Prostate gland (tissue), 2 donors: ENCODE measurements at regions of chr2 and their contacts with region 1.

Region 1: DNA sequence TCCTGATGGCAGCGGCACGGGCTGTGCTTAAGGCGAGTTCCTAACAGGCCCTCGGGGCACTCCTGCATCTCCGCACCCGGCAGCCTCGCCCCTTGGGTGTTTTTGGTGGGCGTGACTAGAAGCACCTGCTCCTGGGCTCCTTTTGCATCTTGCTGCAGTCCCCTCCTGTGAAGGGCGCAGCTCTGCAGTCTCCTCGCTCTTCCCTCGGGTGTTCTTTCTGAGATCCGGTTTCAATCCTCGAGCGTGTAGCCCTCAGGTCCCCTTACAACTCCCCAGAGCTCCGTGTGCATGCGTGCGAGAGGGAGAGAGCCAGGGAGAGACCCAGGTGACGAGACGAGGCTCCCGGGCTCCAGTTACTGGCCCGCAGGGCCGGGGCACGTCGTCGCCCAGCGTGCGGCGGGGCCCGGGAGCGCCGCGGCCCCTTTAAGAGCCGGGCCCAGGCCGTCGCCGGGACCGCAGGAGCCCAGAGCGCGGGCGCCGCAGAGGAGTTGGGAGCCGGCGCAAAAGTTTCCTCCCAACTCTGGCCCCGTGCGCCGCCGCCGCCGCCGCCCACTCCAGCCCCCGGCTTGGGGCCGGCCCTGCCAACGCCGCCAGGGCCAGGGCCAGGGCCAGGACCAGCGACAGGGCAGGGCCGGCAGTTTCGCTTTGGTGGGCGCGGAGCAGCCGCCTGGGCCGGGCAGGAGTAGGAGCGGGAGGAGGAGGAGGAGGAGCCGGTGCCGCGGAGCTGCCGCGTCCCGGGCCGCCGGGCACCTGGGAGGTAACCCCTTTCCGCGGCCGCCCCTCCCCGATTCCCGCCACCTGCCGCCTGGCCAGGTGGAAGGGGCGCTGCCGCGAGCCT is at the start of gene PARD3B:
- DNase-seq: peak; percentile 45
- H3K4me3 ChIP-seq: peak within 1 kb of the TSS; percentile 76
- H3K27ac ChIP-seq: peak within 1 kb of the TSS; percentile 84 to 85
- H3K4me1 ChIP-seq: no peaks in the 10 kb centered on the region
- H3K27me3 ChIP-seq: no peaks in the 10 kb centered on the region
- CTCF ChIP-seq: no peak
- POLR2A ChIP-seq: no peak
- total RNA-seq, gene PARD3B: 14.7 to 25.0 TPM

Region 2: GRCh38 chr2:204081487-204082425 is 463.5 kb before region 1 on chr2:
- intact Hi-C with region 1: no loop called
- DNase-seq: no peak
- H3K4me3 ChIP-seq: no peak overlapping the region
- H3K27ac ChIP-seq: no peak overlapping the region
- H3K4me1 ChIP-seq: no peaks in the 10 kb centered on the region
- H3K27me3 ChIP-seq: no peaks in the 10 kb centered on the region
- CTCF ChIP-seq: no peak
- POLR2A ChIP-seq: no peak

Region 3: GRCh38 chr2:204681412-204681811 is 136.2 kb after region 1 on chr2:
- intact Hi-C with region 1: loop called (anchors 10 kb)
- DNase-seq: no peak
- H3K4me3 ChIP-seq: no peak overlapping the region
- H3K27ac ChIP-seq: no peak overlapping the region
- H3K4me1 ChIP-seq: no peaks in the 10 kb centered on the region
- H3K27me3 ChIP-seq: no peaks in the 10 kb centered on the region
- CTCF ChIP-seq: no peak
- POLR2A ChIP-seq: no peak

Region 4: DNA sequence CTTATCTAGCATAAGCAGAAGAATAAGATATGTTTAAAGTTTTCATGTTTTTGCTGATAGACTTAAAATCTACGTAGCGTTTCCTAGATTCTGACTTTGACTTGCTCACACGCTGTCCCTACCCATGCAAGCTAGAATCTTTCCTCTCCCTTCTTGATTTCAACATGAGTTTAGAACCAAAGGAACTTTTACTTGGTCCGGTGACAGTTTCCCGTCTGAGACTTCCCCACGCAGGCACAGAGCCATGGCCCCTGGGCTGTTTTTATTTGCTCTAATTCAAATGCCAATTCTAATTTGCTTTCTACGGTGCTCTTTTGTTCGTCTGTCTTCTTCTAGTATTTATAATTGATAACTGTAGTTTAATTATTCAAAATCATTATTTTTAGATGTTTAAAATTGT is 467.7 kb after region 1 on chr2:
- intact Hi-C with region 1: no loop called
- DNase-seq: no peak
- H3K4me3 ChIP-seq: no peak overlapping the region
- H3K27ac ChIP-seq: no peak overlapping the region
- H3K4me1 ChIP-seq: no peaks in the 10 kb centered on the region
- H3K27me3 ChIP-seq: no peaks in the 10 kb centered on the region
- CTCF ChIP-seq: no peak
- POLR2A ChIP-seq: no peak